Panc1 (cell line): ENCODE measurements at regions of chr17 and their contacts with region 1.

Region 1: DNA sequence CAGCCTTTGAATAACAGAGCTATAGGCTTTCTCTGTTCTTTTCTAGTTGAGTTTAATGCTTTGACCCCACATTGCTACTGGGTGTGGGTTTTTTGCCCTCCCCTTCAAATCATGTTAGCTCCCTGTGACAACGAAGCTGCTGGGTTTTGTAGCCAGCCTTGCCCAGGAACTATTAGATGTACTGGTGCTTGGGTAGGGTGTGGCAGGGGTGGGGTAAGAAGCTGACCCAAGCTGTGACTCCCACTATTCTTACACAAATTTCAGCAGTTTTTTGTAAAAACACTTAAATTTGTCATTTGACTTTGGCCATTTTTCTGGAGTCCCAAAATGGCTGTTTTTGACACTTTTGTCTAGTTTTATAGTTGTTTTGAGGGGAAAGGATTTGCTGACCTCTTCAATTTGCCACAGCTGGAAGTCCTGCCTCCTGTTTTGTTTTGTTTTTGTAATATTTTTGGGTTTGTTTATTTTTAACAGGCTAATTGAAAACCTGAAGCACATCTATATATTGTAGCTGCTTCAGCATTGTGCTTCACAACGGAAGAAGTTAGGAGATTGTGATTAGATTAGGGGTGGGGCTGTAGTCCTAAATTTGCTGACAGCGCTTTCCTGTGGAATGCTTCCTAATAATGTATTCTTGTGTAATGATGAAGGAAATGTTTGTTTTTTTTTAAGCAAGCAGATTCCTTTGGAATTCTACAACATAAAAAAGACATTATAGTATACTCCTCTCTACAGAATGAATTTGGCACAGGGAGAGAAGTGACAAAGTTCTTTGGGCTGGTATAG is 69.9 kb downstream of the NLK start:
- DNase-seq: no peak
- ATAC-seq: no peak
- H3K4me3 ChIP-seq: no peak overlapping the region
- H3K27ac ChIP-seq: no peak overlapping the region
- H3K4me1 ChIP-seq: 0 out of 2 replicates have a peak, but pooled peaks cover 5% of the 10 kb centered on the region
- H3K27me3 ChIP-seq: no peaks in the 10 kb centered on the region
- CTCF ChIP-seq: no peak

Region 2: GRCh38 chr17:27511168-27511883 is 601.1 kb before region 1 on chr17:
- CTCF ChIA-PET with region 1: no interaction called
- POLR2A ChIA-PET with region 1: interaction called, 13 read pairs
- in situ Hi-C with region 1: no loop called
- intact Hi-C with region 1: no loop called
- DNase-seq: no peak
- ATAC-seq: no peak
- H3K4me3 ChIP-seq: no peak overlapping the region
- H3K27ac ChIP-seq: no peak overlapping the region
- H3K4me1 ChIP-seq: no peaks in the 10 kb centered on the region
- H3K27me3 ChIP-seq: no peaks in the 10 kb centered on the region
- CTCF ChIP-seq: no peak